ENCODE measurements at regions of chr5 and their contacts with region 1.

Region 1: GRCh38 chr5:68287976-68288706 is 72.6 kb downstream of the PIK3R1 start:
- DNase-seq: peak; percentile 26 to 62 (median 60)
- H3K4me3 ChIP-seq: peak overlapping the region; percentile 67
- H3K4me3 Mint-ChIP-seq: peak overlapping the region; percentile 74 to 97 (median 93)
- H3K27ac ChIP-seq: peak overlapping the region; percentile 55
- H3K27ac Mint-ChIP-seq: peak overlapping the region; percentile 81 to 98 (median 92)
- H3K4me1 ChIP-seq: peaks cover 82% of the 10 kb centered on the region
- H3K4me1 Mint-ChIP-seq: peaks cover 89 to 94% (median 94%) of the 10 kb centered on the region in 3 donors
- H3K27me3 ChIP-seq: no peaks in the 10 kb centered on the region
- H3K27me3 Mint-ChIP-seq: no peaks in the 10 kb centered on the region

Region 2: GRCh38 chr5:68272289-68272688 is 15.9 kb before region 1 on chr5:
- CTCF ChIA-PET with region 1: interaction called, 29 read pairs
- POLR2A ChIA-PET with region 1: interaction called, 3 read pairs
- DNase-seq: no peak
- H3K4me3 ChIP-seq: no peak overlapping the region
- H3K4me3 Mint-ChIP-seq: peak overlapping the region in 2 of 7 donors; percentile 5 to 13
- H3K27ac ChIP-seq: no peak overlapping the region
- H3K27ac Mint-ChIP-seq: peak overlapping the region in 7 of 8 donors; percentile 27 to 91 (median 70)
- H3K4me1 ChIP-seq: peaks cover 94% of the 10 kb centered on the region
- H3K4me1 Mint-ChIP-seq: peaks cover 84 to 95% (median 95%) of the 10 kb centered on the region in 3 donors
- H3K27me3 ChIP-seq: no peaks in the 10 kb centered on the region
- H3K27me3 Mint-ChIP-seq: no peaks in the 10 kb centered on the region

Region 3: GRCh38 chr5:68344447-68345111 is 56.4 kb after region 1 on chr5:
- CTCF ChIA-PET with region 1: no interaction called
- POLR2A ChIA-PET with region 1: no interaction called
- DNase-seq: peak in 1 of 5 donors; percentile 4
- H3K4me3 ChIP-seq: no peak overlapping the region
- H3K4me3 Mint-ChIP-seq: peak overlapping the region in 4 of 7 donors; percentile 2 to 29 (median 6)
- H3K27ac ChIP-seq: no peak overlapping the region
- H3K27ac Mint-ChIP-seq: peak overlapping the region in 5 of 8 donors; percentile 3 to 77 (median 39)
- H3K4me1 ChIP-seq: peaks cover 10% of the 10 kb centered on the region
- H3K4me1 Mint-ChIP-seq: peaks cover 12 to 22% (median 18%) of the 10 kb centered on the region in 3 donors
- H3K27me3 ChIP-seq: no peaks in the 10 kb centered on the region
- H3K27me3 Mint-ChIP-seq: no peaks in the 10 kb centered on the region

Region 4: DNA sequence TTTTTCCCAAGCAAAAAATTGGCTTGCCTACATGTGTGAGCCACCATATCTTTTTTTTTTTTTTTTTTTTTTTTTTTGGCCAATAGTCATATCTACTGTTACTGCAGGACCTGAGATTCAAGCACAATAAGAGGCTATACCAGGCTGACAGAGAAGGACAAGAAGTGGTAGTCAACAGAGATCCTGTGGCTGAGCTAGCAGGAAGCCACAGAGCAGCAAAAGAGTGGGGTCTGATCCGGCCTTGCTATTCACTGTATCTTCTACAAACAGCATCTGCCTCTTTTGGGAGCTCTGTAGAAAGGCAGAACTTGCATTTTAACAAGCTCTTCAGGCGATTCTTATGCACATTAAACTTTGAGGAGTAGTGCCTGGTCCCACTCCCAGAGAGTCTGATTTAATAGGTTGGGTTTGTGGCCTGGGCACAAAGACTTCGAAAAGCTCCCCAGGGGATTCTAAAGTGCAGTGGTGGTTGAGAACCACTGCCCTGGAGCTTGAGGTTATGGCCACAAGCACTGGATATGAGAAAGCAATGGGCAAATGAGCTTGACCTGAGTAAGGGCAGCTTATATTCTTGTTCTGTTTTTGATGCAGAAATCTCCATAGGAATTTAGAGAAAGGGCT is 90.2 kb after region 1 on chr5:
- CTCF ChIA-PET with region 1: interaction called, 10 read pairs
- POLR2A ChIA-PET with region 1: no interaction called
- DNase-seq: peak in 1 of 5 donors; percentile 4
- H3K4me3 ChIP-seq: no peak overlapping the region
- H3K4me3 Mint-ChIP-seq: peak overlapping the region in 6 of 7 donors; percentile 15 to 83 (median 46)
- H3K27ac ChIP-seq: no peak overlapping the region
- H3K27ac Mint-ChIP-seq: peak overlapping the region in 7 of 8 donors; percentile 13 to 82 (median 54)
- H3K4me1 ChIP-seq: peaks cover 17% of the 10 kb centered on the region
- H3K4me1 Mint-ChIP-seq: peaks cover 54 to 81% (median 72%) of the 10 kb centered on the region in 3 donors
- H3K27me3 ChIP-seq: no peaks in the 10 kb centered on the region
- H3K27me3 Mint-ChIP-seq: no peaks in the 10 kb centered on the region

Region 5: GRCh38 chr5:68406767-68407241 is 118.7 kb after region 1 on chr5:
- CTCF ChIA-PET with region 1: no interaction called
- POLR2A ChIA-PET with region 1: no interaction called
- DNase-seq: peak in 1 of 5 donors; percentile 5
- H3K4me3 ChIP-seq: no peak overlapping the region
- H3K4me3 Mint-ChIP-seq: peak overlapping the region in 6 of 7 donors; percentile 43 to 82 (median 59)
- H3K27ac ChIP-seq: no peak overlapping the region
- H3K27ac Mint-ChIP-seq: peak overlapping the region in 7 of 8 donors; percentile 11 to 88 (median 84)
- H3K4me1 ChIP-seq: peaks cover 15% of the 10 kb centered on the region
- H3K4me1 Mint-ChIP-seq: peaks cover 27 to 39% (median 29%) of the 10 kb centered on the region in 3 donors
- H3K27me3 ChIP-seq: no peaks in the 10 kb centered on the region
- H3K27me3 Mint-ChIP-seq: no peaks in the 10 kb centered on the region

Region 6: DNA sequence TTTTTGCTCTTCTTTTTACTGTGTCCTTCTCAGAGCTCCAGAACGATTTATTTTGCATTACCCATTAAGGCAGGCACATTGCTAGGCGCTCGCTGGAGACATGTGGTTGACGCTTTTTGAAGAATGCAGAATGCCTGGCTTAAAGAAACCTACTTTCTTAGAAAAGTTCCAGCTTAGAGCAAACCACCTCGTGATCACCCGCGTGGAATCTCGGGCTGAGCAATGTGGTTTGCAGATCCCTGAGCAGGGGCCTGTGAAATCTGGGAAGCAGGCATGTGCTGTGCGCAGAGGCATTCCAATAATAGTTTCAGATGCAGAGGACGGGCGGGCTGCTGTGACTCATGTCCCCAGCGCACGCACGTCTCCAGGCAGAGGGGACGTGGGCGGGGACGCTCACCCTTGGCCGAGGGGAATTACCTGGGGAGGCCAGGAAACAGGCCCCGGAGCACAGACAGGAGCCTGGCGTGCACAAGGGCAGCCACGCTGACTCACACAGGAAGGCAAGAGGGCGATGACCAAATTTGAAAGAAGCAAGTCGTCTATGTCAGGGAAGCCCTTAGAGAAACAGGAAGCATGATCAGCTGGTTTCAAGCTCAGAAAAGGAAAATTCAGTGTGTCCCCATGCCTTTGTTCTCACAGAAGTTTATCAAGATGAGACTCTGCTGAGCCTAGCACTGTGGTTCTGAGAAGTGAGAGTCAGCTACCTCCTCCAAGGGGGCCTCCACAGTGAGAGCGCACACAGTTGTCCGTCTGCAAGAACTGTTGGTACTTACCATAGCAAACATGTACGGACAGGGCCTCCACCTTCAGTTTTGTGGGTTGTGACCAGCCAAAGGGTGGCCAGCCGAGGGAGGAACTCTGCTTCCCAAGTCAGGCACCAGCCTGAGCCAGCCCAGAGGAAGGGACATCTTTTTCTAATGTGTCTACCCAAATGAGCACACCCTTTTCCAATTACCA is 146.1 kb after region 1 on chr5:
- CTCF ChIA-PET with region 1: interaction called, 23 read pairs
- POLR2A ChIA-PET with region 1: interaction called, 4 read pairs
- DNase-seq: peak; percentile 66 to 94 (median 80)
- H3K4me3 ChIP-seq: peak overlapping the region; percentile 70
- H3K4me3 Mint-ChIP-seq: peak overlapping the region; percentile 9 to 81 (median 78)
- H3K27ac ChIP-seq: peak overlapping the region; percentile 73
- H3K27ac Mint-ChIP-seq: peak overlapping the region; percentile 79 to 95 (median 86)
- H3K4me1 ChIP-seq: peaks cover 25% of the 10 kb centered on the region
- H3K4me1 Mint-ChIP-seq: peaks cover 27 to 45% (median 36%) of the 10 kb centered on the region in 3 donors
- H3K27me3 ChIP-seq: no peaks in the 10 kb centered on the region
- H3K27me3 Mint-ChIP-seq: no peaks in the 10 kb centered on the region

Region 7: GRCh38 chr5:68441309-68442073 is 153.3 kb after region 1 on chr5:
- CTCF ChIA-PET with region 1: interaction called, 23 read pairs
- POLR2A ChIA-PET with region 1: no interaction called
- DNase-seq: peak in 1 of 5 donors; percentile 57
- H3K4me3 ChIP-seq: no peak overlapping the region
- H3K4me3 Mint-ChIP-seq: peak overlapping the region in 3 of 7 donors; percentile 20 to 32 (median 25)
- H3K27ac ChIP-seq: no peak overlapping the region
- H3K27ac Mint-ChIP-seq: peak overlapping the region in 6 of 8 donors; percentile 5 to 82 (median 30)
- H3K4me1 ChIP-seq: peaks cover 8% of the 10 kb centered on the region
- H3K4me1 Mint-ChIP-seq: peaks cover 18 to 34% (median 26%) of the 10 kb centered on the region in 3 donors
- H3K27me3 ChIP-seq: no peaks in the 10 kb centered on the region
- H3K27me3 Mint-ChIP-seq: no peaks in the 10 kb centered on the region

Region 8: GRCh38 chr5:68460147-68460798 is 172.1 kb after region 1 on chr5:
- CTCF ChIA-PET with region 1: interaction called, 47 read pairs
- POLR2A ChIA-PET with region 1: no interaction called
- DNase-seq: peak in 4 of 5 donors; percentile 23 to 52 (median 43)
- H3K4me3 ChIP-seq: no peak overlapping the region
- H3K4me3 Mint-ChIP-seq: no peak overlapping the region
- H3K27ac ChIP-seq: no peak overlapping the region
- H3K27ac Mint-ChIP-seq: peak overlapping the region in 1 of 8 donors; percentile 35
- H3K4me1 ChIP-seq: peaks cover 14% of the 10 kb centered on the region
- H3K4me1 Mint-ChIP-seq: peaks cover 13 to 22% (median 20%) of the 10 kb centered on the region in 3 donors
- H3K27me3 ChIP-seq: no peaks in the 10 kb centered on the region
- H3K27me3 Mint-ChIP-seq: no peaks in the 10 kb centered on the region